ENCODE measurements at regions of chr15 and their contacts with region 1.

Region 1: GRCh38 chr15:68875377-68876116 is 54.8 kb upstream of the SPESP1 start:
- DNase-seq: peak; percentile 94 to 98
- ATAC-seq: peak; percentile 93
- H3K4me3 ChIP-seq: no peak overlapping the region
- H3K27ac ChIP-seq: no peak overlapping the region
- H3K4me1 ChIP-seq: no peaks in the 10 kb centered on the region
- H3K27me3 ChIP-seq: no peaks in the 10 kb centered on the region

Region 2: GRCh38 chr15:68550481-68551295 is 324.9 kb before region 1 on chr15:
- intact Hi-C with region 1: loop called (anchors 5 kb)
- DNase-seq: peak; percentile 75 to 91
- ATAC-seq: peak; percentile 74
- H3K4me3 ChIP-seq: no peak overlapping the region
- H3K27ac ChIP-seq: no peak overlapping the region
- H3K4me1 ChIP-seq: no peaks in the 10 kb centered on the region
- H3K27me3 ChIP-seq: no peaks in the 10 kb centered on the region

Region 3: GRCh38 chr15:68730471-68730919 is 145.1 kb before region 1 on chr15:
- intact Hi-C with region 1: loop called (anchors 1 to 2 kb)
- DNase-seq: no peak
- ATAC-seq: peak; percentile 64
- H3K4me3 ChIP-seq: no peak overlapping the region
- H3K27ac ChIP-seq: no peak overlapping the region
- H3K4me1 ChIP-seq: peaks cover 0 to 2% of the 10 kb centered on the region in 2 donors
- H3K27me3 ChIP-seq: no peaks in the 10 kb centered on the region

Region 4: DNA sequence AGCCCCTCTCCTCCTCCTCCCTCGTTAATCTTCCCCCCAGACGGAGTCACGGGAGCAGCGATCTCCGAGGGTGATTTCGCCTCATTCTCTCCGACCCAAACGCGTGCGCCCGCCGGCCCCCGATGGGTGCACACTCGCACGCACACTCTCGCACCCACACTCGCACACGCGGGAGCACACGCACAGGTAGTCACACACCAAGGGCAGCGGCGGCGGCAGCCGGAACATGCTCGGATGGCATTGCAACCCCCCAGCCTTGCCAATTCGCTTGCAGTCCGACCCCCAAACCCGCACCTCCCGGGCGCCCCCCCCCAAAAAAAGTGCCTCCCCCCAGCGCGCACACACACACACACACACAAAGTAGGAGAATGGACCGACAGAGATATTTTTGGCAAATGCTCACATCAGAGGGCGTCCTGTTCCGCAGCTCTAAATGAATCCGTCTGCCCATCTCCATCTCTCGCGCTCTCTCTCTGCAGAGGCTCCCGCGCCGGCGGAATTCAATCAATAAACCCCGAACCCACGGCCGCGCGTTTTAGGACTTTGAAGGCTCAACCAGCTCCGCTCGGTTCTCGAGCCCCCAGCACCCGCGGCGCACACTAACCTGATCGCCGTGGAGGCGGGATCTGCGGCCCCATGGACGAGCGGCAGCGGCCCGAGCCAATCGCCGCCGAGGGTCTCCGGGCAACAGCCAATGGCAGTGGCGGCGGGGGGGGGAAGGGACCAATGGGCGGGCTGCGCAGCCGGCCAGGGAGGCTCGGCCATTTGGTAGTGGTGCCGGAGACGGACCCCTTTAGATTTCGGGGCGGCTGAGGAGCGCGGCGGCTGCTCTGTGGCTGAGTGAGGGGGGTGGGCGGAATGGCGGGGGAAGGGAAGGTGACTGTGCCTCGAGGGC is 55.0 kb before region 1 on chr15 and contains the start of gene ANP32A:
- intact Hi-C with region 1: no loop called
- DNase-seq: peak; percentile 98
- ATAC-seq: peak; percentile 94
- H3K4me3 ChIP-seq: peak within 1 kb of the TSS; percentile 67 to 98
- H3K27ac ChIP-seq: peak within 1 kb of the TSS; percentile 59 to 64
- H3K4me1 ChIP-seq: no peaks in the 10 kb centered on the region
- H3K27me3 ChIP-seq: no peaks in the 10 kb centered on the region
- total RNA-seq, gene ANP32A: 76.1 to 106 TPM

Measured in aorta (tissue), 5 donors.